Activated CD4-positive, alpha-beta T cell treated with anti-CD3 and anti-CD28 coated beads, Interleukin-2, amount 10 ng/mL, durations not matched to agents 7 days and 5 days (primary cell): ENCODE measurements at regions of chr5 and their contacts with region 1.

Region 1: DNA sequence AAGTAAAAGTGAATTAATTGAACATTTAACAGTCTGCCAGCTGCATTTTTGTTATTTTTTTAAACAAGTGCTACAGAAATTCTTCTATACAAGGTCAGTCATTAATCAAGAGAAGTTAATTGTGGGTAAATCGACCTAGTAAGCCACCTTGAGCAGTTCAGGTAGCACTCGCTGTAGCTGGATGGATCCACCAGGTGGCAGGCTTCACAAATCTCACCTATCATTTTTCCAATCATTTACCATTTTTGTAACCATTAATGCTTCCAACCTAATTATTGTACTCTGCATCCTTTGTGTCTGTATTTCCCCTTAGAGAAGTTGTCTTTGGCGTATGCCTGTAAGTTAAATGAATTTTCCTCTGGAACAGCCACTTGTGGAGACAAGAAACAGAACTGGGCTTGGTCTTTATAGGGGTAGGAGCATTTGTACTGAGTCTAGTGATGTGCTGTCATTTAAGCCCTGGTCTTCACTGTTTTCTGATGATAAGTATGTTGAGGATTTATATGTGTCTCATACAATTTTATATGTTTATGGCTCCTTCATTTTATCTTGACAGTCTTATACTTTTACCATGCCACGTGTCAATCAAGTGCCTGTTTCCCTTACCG is 39.5 kb downstream of the CD180 start:
- DNase-seq: peak; percentile 58
- H3K4me3 Mint-ChIP-seq: no peak overlapping the region
- H3K27ac Mint-ChIP-seq: peak overlapping the region; percentile 72
- H3K4me1 Mint-ChIP-seq: peaks cover 54% of the 10 kb centered on the region
- H3K27me3 Mint-ChIP-seq: no peaks in the 10 kb centered on the region

Region 2: DNA sequence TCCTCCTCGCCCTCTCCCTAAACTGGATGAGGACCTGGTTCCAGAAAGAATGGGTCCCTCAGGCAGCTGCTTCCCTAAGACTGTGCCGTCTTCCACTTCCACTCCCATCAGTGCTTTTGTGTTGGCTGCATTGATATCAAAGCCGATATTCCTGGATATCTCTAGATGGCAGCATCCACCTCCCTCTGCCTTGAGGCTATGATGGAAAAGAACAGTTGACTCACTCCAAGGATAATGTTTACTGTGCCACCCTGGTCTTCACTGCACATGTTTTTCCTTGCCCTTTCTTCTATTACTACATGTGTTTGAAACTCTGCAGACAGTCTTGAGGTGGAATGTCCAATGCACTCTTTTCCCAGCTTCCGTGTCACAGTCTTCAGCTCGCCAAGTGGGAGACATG is 349.3 kb before region 1 on chr5:
- CTCF ChIA-PET with region 1: no interaction called
- POLR2A ChIA-PET with region 1: no interaction called
- DNase-seq: no peak
- H3K4me3 Mint-ChIP-seq: no peak overlapping the region
- H3K27ac Mint-ChIP-seq: no peak overlapping the region
- H3K4me1 Mint-ChIP-seq: peaks cover 6% of the 10 kb centered on the region
- H3K27me3 Mint-ChIP-seq: peaks cover 43% of the 10 kb centered on the region

Region 3: DNA sequence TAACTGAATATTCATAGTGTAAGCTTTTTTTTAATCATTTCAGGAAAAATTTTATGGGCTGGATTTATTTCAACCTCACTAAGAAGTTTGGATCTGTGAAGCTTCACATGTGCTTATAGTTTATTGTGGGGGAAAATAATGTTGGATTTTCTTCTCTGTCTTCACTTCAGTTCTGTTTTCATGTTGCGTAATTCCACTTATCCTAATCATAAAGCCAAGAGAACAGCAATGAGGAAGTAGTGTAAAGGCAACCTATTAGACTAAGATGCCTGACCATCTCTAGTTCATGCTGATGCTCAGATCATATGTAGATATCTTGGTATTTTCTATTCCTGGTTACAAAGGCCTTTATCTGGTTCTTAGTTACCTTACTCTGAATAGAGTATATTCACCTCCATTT is 10.5 kb before region 1 on chr5:
- CTCF ChIA-PET with region 1: interaction called, 12 read pairs
- POLR2A ChIA-PET with region 1: no interaction called
- DNase-seq: no peak
- H3K4me3 Mint-ChIP-seq: no peak overlapping the region
- H3K27ac Mint-ChIP-seq: no peak overlapping the region
- H3K4me1 Mint-ChIP-seq: peaks cover 6% of the 10 kb centered on the region
- H3K27me3 Mint-ChIP-seq: no peaks in the 10 kb centered on the region